ENCODE measurements at regions of chr10 and their contacts with region 1.

Region 1: GRCh38 chr10:28891058-28891713 is 213.9 kb downstream of the BAMBI start:
- DNase-seq: no peak
- H3K4me3 ChIP-seq: no peak overlapping the region
- H3K27ac ChIP-seq: no peak overlapping the region
- H3K4me1 ChIP-seq: no peaks in the 10 kb centered on the region
- H3K27me3 ChIP-seq: no peaks in the 10 kb centered on the region
- CTCF ChIP-seq: no peak
- EP300 ChIP-seq: no peak
- POLR2A ChIP-seq: no peak

Region 2: GRCh38 chr10:28939281-28940157 is 48.3 kb after region 1 on chr10:
- intact Hi-C with region 1: loop called in 1 of 4 experiments (anchors 1 kb)
- DNase-seq: peak in 4 of 5 donors; percentile 34 to 85 (median 48)
- H3K4me3 ChIP-seq: no peak overlapping the region
- H3K27ac ChIP-seq: no peak overlapping the region
- H3K4me1 ChIP-seq: peaks cover 2% of the 10 kb centered on the region
- H3K27me3 ChIP-seq: no peaks in the 10 kb centered on the region
- CTCF ChIP-seq: no peak
- EP300 ChIP-seq: no peak
- POLR2A ChIP-seq: no peak

Region 3: GRCh38 chr10:29050081-29050480 is 158.9 kb after region 1 on chr10:
- intact Hi-C with region 1: no loop called
- DNase-seq: no peak
- H3K4me3 ChIP-seq: no peak overlapping the region
- H3K27ac ChIP-seq: no peak overlapping the region
- H3K4me1 ChIP-seq: no peaks in the 10 kb centered on the region
- H3K27me3 ChIP-seq: no peaks in the 10 kb centered on the region
- CTCF ChIP-seq: no peak
- EP300 ChIP-seq: no peak
- POLR2A ChIP-seq: no peak

Measured in ovary (tissue), 10 donors.